Activated CD4-positive, alpha-beta T cell treated with anti-CD3 and anti-CD28 coated beads for 36 hours (primary cell): ENCODE measurements at regions of chr7 and their contacts with region 1.

Region 1: DNA sequence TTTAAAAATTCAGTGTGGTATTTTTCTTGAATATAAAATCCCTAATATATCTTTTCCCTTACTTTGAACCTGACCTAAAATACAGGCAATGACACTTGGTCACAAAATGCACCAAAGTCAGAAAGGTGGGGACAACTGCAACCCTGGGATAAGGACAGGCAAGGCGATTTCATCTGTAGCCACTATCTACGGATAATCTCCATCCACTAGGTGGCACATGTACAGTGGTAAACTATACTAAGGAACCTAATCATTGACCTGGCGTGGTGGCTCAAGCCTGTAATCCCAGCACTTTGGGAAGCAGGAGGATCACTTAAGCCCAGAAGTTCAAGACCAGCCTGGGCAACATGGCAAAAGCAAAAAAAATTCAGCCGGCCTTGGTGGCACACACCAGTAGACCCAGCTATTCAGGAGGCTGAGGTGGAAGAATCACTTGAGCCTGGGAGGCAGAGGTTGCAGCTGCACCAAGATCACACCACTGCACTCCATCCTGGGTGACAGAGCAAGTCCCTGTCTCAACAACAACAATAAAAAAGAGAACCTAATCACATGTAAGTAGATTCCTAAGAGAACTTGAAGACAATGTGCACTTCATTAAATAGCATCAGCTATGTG is 98.9 kb downstream of the KMT2C start:
- DNase-seq: peak; percentile 16
- ATAC-seq: peak; percentile 86
- H3K4me3 Mint-ChIP-seq: no peak overlapping the region
- H3K27ac Mint-ChIP-seq: no peak overlapping the region
- H3K4me1 Mint-ChIP-seq: peaks cover 51% of the 10 kb centered on the region
- H3K27me3 Mint-ChIP-seq: no peaks in the 10 kb centered on the region

Region 2: GRCh38 chr7:152383341-152384234 is 46.7 kb after region 1 on chr7:
- CTCF ChIA-PET with region 1: no interaction called
- POLR2A ChIA-PET with region 1: interaction called, 11 read pairs
- intact Hi-C with region 1: no loop called
- DNase-seq: peak; percentile 22
- ATAC-seq: peak; percentile 63
- H3K4me3 Mint-ChIP-seq: no peak overlapping the region
- H3K27ac Mint-ChIP-seq: no peak overlapping the region
- H3K4me1 Mint-ChIP-seq: peaks cover 26% of the 10 kb centered on the region
- H3K27me3 Mint-ChIP-seq: no peaks in the 10 kb centered on the region

Region 3: GRCh38 chr7:152436111-152436930 is 99.5 kb after region 1 on chr7:
- CTCF ChIA-PET with region 1: interaction called, 4 read pairs
- POLR2A ChIA-PET with region 1: no interaction called
- intact Hi-C with region 1: loop called in 1 of 2 experiments (anchors 2 kb)
- DNase-seq: peak; percentile 93
- ATAC-seq: peak; percentile 55
- H3K4me3 Mint-ChIP-seq: peak overlapping the region; percentile 74
- H3K27ac Mint-ChIP-seq: peak overlapping the region; percentile 82
- H3K4me1 Mint-ChIP-seq: peaks cover 22% of the 10 kb centered on the region
- H3K27me3 Mint-ChIP-seq: no peaks in the 10 kb centered on the region

Region 4: DNA sequence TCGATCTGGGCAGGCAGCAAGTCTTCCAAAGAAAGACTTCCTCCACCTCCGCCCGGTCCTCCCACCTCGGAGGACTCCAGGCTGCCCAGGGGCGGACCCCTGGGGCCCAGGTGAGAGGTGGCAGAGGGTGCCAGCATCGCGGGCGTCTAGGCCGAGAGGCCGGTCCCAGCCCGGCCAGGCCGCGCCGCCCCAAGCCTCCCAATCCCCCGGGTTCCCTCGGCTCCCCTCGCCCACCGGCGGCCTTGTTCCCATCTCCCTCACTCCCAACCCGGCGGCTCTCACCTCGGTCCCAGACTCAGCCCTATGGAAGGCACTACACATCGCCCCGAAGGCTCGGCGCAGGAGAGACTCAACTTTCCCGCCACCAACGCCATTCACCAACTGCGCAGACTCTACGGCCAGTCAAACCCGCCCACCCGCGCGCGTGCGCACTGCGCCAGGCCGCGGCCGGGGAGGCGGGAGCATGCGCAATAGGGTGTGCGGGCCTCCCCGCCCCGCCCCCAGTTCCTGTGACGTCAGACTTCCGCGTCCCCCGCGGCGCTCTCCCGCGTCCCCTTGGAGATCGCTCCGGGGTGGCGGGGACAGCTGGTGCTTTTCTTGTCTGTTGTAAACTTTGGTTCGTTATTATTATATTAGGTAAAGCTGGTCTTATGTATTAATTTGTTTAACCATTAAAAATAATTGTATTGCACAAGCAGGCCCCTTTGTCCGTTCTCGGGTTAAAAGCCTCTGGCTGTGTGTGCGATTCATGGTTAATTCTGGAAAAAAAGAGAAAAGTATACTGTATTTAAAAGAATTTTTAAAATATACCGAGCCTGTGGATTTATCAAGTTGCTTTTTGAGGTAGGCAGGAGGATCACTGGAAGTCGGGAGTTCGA is 339.1 kb after region 1 on chr7 and contains the start of gene XRCC2:
- CTCF ChIA-PET with region 1: no interaction called
- POLR2A ChIA-PET with region 1: no interaction called
- intact Hi-C with region 1: loop called in 1 of 2 experiments (anchors 10 kb)
- DNase-seq: peak; percentile 97
- ATAC-seq: peak; percentile 96
- H3K4me3 Mint-ChIP-seq: peak within 1 kb of the TSS; percentile 83
- H3K27ac Mint-ChIP-seq: peak within 1 kb of the TSS; percentile 98
- H3K4me1 Mint-ChIP-seq: peaks cover 8% of the 10 kb centered on the region
- H3K27me3 Mint-ChIP-seq: no peaks in the 10 kb centered on the region
- total RNA-seq, gene XRCC2: 19.3 to 23.6 TPM